GM12878 (cell line): ENCODE measurements at regions of chr3 and their contacts with region 1.

Region 1: DNA sequence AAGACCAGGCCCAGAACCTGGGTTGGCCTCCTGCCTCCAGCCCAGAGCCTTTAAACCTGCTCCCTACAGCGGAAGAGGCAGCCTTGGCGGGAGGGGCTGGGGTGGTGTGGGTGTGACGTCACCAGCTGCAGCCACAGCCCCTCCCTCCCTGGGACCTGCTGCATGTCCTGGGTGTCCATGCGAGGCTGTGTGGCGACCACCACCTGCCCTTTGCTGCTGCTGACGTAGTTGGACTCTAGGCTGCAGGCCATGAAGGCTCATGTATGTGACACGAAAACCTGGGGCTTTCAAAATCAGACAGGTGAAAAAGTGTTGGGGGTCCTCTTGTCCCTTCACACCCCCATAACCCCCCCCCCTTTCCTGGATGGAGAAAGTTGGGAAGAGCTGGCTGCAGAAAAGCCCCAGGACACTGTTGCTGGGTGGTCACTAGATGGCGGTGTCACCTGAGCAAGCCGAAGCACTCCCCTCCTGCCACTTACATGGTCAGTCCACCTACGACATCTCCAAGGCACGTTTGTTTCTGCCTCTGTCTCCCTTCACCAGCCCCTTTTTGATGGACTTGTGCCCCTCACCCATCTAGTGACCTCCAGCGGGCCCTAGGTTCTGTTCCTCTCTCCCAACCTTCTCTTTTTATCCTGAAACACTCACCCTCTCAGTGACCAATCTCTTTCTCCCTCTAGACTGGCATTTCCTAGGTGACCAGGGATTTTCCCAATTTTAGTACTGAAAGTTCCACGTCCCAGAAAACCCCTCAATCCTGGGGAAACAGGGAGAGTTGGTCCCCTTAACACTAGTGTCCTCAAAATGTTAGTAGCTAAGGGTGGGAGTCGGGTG is 35.2 kb downstream of the SLC6A20 start:
- DNase-seq: peak; percentile 5
- ATAC-seq: peak; percentile 98
- H3K4me3 ChIP-seq: no peak overlapping the region
- H3K27ac ChIP-seq: no peak overlapping the region
- H3K4me1 ChIP-seq: no peaks in the 10 kb centered on the region
- H3K27me3 ChIP-seq: 0 out of 4 replicates have a peak, but pooled peaks cover 0 to 2% of the 10 kb centered on the region in 2 experiments
- CTCF ChIP-seq: peak; percentile 80 to 89 (median 83)
- EP300 ChIP-seq: no peak
- POLR2A ChIP-seq: no peak
- RAD21 ChIP-seq: peak; percentile 87

Region 2: GRCh38 chr3:45832691-45833090 is 71.6 kb after region 1 on chr3:
- CTCF ChIA-PET with region 1: interaction called, 17 read pairs
- POLR2A ChIA-PET with region 1: no interaction called
- RAD21 ChIA-PET with region 1: interaction called, 6 read pairs
- SMC1A ChIA-PET with region 1: interaction called, 3 read pairs
- in situ Hi-C with region 1: no loop called
- intact Hi-C with region 1: loop called (anchors 2 kb)
- DNase-seq: no peak
- ATAC-seq: peak; percentile 53; the same call in 1 of the 3 replicates
- H3K4me3 ChIP-seq: no peak overlapping the region
- H3K27ac ChIP-seq: no peak overlapping the region
- H3K4me1 ChIP-seq: no peaks in the 10 kb centered on the region
- H3K27me3 ChIP-seq: no peaks in the 10 kb centered on the region
- CTCF ChIP-seq: peak; percentile 39 to 50 (median 46); a peak in 5 of 6 replicates
- EP300 ChIP-seq: no peak
- POLR2A ChIP-seq: no peak
- RAD21 ChIP-seq: peak; percentile 51

Region 3: GRCh38 chr3:45923755-45924154 is 162.7 kb after region 1 on chr3:
- CTCF ChIA-PET with region 1: interaction called, 189 read pairs
- POLR2A ChIA-PET with region 1: interaction called, 12 read pairs
- RAD21 ChIA-PET with region 1: interaction called, 89 read pairs
- SMC1A ChIA-PET with region 1: interaction called, 86 read pairs
- in situ Hi-C with region 1: loop called (anchors 5 kb)
- intact Hi-C with region 1: no loop called
- DNase-seq: no peak
- ATAC-seq: no peak
- H3K4me3 ChIP-seq: no peak overlapping the region
- H3K27ac ChIP-seq: no peak overlapping the region
- H3K4me1 ChIP-seq: no peaks in the 10 kb centered on the region; the same call in 1 of the 2 replicates
- H3K27me3 ChIP-seq: no peaks in the 10 kb centered on the region
- CTCF ChIP-seq: no peak
- EP300 ChIP-seq: no peak
- POLR2A ChIP-seq: no peak
- RAD21 ChIP-seq: no peak

Region 4: DNA sequence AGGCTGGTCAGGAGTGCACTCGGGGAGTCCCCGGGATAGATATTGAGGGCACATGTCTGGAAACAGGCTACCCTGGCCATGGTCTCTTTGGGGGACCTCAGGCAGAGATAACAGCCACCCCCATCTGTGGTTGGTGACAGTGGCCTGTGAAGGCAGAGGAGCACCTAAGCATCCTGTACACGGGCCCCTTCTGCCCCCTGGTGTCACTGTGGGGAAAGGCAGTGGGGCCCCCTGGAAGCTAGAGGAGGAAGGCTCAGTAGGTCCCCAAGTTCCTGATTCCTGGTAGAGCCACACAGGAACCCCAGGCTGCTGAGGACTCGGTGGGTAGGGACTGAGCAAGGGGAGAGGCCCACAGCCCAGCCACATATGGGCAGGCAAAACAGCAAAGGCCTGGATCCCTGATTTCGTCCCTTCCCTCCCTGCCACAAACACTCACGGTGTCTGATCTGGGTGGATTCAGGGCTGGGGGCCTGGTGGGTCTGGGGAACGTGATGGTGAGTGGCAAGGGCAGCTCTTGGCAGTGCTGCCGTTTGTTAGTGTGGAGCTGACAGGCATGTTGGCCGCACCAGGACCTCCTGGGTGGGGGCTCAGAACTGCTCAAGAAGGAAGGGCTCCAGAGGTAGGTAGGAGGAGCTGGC is 168.1 kb after region 1 on chr3:
- CTCF ChIA-PET with region 1: interaction called, 189 read pairs
- POLR2A ChIA-PET with region 1: interaction called, 12 read pairs
- RAD21 ChIA-PET with region 1: interaction called, 89 read pairs
- SMC1A ChIA-PET with region 1: interaction called, 86 read pairs
- in situ Hi-C with region 1: loop called (anchors 5 kb)
- intact Hi-C with region 1: loop called (anchors 1 kb)
- DNase-seq: no peak
- ATAC-seq: peak; percentile 100
- H3K4me3 ChIP-seq: no peak overlapping the region
- H3K27ac ChIP-seq: no peak overlapping the region
- H3K4me1 ChIP-seq: no peaks in the 10 kb centered on the region; the same call in 1 of the 2 replicates
- H3K27me3 ChIP-seq: no peaks in the 10 kb centered on the region
- CTCF ChIP-seq: peak; percentile 94 to 98 (median 97); a peak in 5 of 6 replicates
- EP300 ChIP-seq: no peak
- POLR2A ChIP-seq: no peak
- RAD21 ChIP-seq: peak; percentile 99